ENCODE measurements at regions of chr6 and their contacts with region 1.

Region 1: DNA sequence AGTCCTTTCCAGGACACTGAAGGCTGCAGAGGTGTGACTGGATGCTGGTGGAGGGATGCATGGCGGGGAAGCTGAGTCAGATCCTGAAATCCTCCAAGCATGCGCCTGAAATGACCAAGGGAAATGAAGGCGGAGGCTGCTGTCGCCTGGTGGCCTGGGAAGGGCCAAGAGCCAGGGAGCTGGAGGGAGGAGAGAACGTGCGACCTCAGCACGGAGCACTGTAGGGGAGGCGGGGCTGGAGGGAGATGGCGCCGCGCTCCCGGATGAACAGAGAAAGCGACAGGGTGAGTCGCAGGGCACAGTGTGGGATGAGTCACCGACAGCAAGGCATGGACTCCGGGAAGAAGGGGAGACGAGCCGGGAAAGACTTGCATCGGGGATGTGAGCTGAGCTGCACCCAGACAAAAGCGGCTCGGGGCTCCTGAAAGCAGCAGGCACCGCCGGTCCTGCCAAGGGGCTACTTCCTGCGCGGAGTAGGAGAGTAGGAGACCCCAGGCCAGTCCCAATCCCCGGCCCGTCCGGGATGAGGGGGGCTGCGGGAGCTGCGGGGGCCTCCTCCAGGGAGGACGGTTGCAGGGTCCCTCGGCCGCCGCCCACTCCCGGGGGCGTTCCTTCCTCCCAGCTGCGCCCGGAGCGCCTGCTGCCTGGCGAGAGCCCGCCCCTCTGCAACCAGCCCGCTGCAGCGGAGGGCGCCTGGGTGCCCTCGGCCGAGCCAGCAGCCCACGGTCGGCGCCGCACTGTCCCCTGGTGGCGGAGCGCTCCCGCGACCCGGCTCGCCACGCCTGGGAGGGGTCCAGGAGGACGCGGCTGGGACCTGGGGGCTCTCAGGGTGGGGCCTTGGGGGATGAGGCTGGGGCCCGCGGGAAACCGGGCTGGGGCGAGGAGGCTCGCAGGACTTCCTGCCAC is 11.0 kb upstream of the NQO2 start:
- DNase-seq: peak; percentile 35 to 87 (median 65)
- ATAC-seq: peak; percentile 75 to 79 (median 76)
- H3K4me3 ChIP-seq: peak overlapping the region; percentile 81 to 97
- H3K4me3 Mint-ChIP-seq: peak overlapping the region; percentile 92 to 93 (median 93)
- H3K27ac ChIP-seq: peak overlapping the region; percentile 96
- H3K27ac Mint-ChIP-seq: peak overlapping the region; percentile 100
- H3K4me1 ChIP-seq: peaks cover 14 to 26% of the 10 kb centered on the region in 2 experiments
- H3K4me1 Mint-ChIP-seq: peaks cover 23 to 37% (median 30%) of the 10 kb centered on the region in 3 donors
- H3K27me3 ChIP-seq: no peaks in the 10 kb centered on the region
- H3K27me3 Mint-ChIP-seq: no peaks in the 10 kb centered on the region

Region 2: GRCh38 chr6:2791124-2791974 is 197.3 kb before region 1 on chr6:
- CTCF ChIA-PET with region 1: interaction called, 10 to 19 read pairs
- POLR2A ChIA-PET with region 1: no interaction called
- DNase-seq: peak in 32 of 35 experiments; percentile 17 to 71 (median 40)
- ATAC-seq: peak; percentile 66 to 78 (median 72)
- H3K4me3 ChIP-seq: no peak overlapping the region
- H3K4me3 Mint-ChIP-seq: peak overlapping the region in 1 of 3 donors; percentile 10
- H3K27ac ChIP-seq: no peak overlapping the region
- H3K27ac Mint-ChIP-seq: peak overlapping the region; percentile 77 to 84
- H3K4me1 ChIP-seq: peaks cover 10 to 21% of the 10 kb centered on the region in 2 experiments
- H3K4me1 Mint-ChIP-seq: peaks cover 25 to 40% (median 26%) of the 10 kb centered on the region in 3 donors
- H3K27me3 ChIP-seq: no peaks in the 10 kb centered on the region
- H3K27me3 Mint-ChIP-seq: no peaks in the 10 kb centered on the region

Region 3: GRCh38 chr6:2931970-2932748 is 56.5 kb before region 1 on chr6:
- CTCF ChIA-PET with region 1: interaction called, 5 to 7 read pairs
- POLR2A ChIA-PET with region 1: interaction called, 8 to 32 read pairs
- DNase-seq: peak; percentile 63 to 92 (median 77)
- ATAC-seq: peak; percentile 82 to 99 (median 94)
- H3K4me3 ChIP-seq: no peak overlapping the region
- H3K4me3 Mint-ChIP-seq: peak overlapping the region in 1 of 3 donors; percentile 58
- H3K27ac ChIP-seq: no peak overlapping the region
- H3K27ac Mint-ChIP-seq: peak overlapping the region; percentile 48 to 84
- H3K4me1 ChIP-seq: peaks cover 14 to 18% of the 10 kb centered on the region in 2 experiments
- H3K4me1 Mint-ChIP-seq: peaks cover 18 to 24% (median 23%) of the 10 kb centered on the region in 3 donors
- H3K27me3 ChIP-seq: no peaks in the 10 kb centered on the region
- H3K27me3 Mint-ChIP-seq: no peaks in the 10 kb centered on the region

Region 4: DNA sequence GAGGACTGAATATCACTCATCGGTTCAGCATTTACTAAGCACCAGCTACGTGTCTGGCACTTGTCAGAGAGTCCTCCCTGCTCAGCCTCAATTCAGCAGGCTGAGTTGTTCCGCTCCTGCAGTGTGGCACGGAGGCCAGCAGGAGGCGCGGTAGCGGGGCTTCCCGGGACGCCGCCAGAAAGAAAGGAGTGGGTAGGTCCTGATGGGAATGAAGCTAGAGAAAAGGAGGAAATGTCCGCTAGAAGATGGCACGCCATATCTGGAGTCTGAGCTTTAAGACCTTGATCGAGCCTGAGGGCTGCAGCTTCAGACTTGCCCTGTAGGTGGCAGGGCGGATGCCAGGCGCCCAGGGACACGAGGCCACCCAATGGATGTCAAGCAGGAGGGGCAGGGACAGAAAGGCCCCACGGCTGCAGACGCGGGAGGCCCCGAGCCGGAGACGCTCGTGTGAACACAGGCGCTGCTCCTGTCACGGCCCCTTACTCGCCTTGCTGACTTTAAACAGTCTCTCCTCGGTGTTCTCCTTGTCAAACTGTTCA is 36.1 kb before region 1 on chr6:
- CTCF ChIA-PET with region 1: interaction called, 11 to 16 read pairs
- POLR2A ChIA-PET with region 1: interaction called in 1 of 2 experiments, 3 read pairs
- DNase-seq: peak in 25 of 35 experiments; percentile 21 to 71 (median 49)
- ATAC-seq: peak; percentile 89 to 93 (median 91)
- H3K4me3 ChIP-seq: peak overlapping the region in 1 of 2 donors; percentile 37
- H3K4me3 Mint-ChIP-seq: peak overlapping the region; percentile 25 to 64 (median 53)
- H3K27ac ChIP-seq: peak overlapping the region; percentile 44
- H3K27ac Mint-ChIP-seq: peak overlapping the region; percentile 39
- H3K4me1 ChIP-seq: peaks cover 2 to 13% of the 10 kb centered on the region in 2 experiments
- H3K4me1 Mint-ChIP-seq: peaks cover 4 to 17% (median 13%) of the 10 kb centered on the region in 3 donors
- H3K27me3 ChIP-seq: no peaks in the 10 kb centered on the region
- H3K27me3 Mint-ChIP-seq: no peaks in the 10 kb centered on the region

Region 5: DNA sequence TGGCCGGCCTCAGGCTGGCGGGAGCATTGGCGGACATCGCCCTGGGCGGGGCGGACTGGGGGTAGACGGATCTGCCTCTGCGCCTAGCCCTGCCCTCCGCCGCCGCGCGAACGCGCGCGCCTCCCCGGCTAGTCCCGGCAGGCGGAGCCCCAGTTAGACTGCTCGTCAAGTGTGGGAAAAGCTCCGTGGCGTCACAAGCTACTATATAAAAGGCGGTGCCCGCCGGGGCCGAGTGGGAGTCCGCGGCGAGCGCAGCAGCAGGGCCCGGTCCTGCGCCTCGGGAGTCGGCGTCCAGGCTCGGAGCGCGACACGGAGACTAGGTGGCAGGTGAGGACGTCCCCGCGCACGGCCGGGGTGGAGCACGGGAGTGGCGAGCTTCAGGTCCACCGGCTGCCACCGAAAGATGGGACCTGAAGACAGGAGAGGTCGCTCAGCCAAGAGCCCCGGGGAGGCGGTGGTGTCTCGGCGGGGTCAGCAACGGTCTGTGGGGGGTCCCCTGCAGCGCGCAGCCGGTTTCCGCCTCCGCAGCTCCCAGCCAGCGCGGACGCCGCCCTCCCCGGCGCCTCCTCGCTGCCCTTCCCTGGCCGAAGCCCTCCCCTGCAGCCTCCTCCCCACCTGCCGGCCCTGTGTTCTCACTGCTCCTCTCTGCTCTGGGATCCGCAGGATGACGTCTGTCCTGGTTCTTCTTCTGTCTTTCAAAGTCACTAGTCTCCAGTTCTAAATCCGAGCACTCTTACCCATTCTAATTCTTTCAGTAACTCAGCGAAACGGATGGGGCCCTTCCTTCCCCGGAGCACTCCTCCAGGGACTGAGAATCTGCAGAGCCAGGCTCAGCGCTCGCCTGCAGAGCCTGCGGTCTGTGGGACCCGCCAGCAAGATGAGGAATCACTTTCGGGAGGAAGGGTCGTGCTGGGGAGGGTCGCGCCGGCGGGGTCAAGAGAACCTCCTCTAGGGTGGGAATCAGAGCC is 75.3 kb after region 1 on chr6:
- CTCF ChIA-PET with region 1: interaction called in 1 of 2 experiments, 12 read pairs
- POLR2A ChIA-PET with region 1: interaction called, 5 to 16 read pairs
- DNase-seq: peak; percentile 68 to 92 (median 79)
- ATAC-seq: peak; percentile 77 to 80 (median 79)
- H3K4me3 ChIP-seq: peak overlapping the region; percentile 71 to 83
- H3K4me3 Mint-ChIP-seq: peak overlapping the region; percentile 85 to 96 (median 89)
- H3K27ac ChIP-seq: peak overlapping the region; percentile 67
- H3K27ac Mint-ChIP-seq: peak overlapping the region; percentile 79 to 85
- H3K4me1 ChIP-seq: peaks cover 5 to 24% of the 10 kb centered on the region in 2 experiments
- H3K4me1 Mint-ChIP-seq: peaks cover 31 to 44% (median 38%) of the 10 kb centered on the region in 3 donors
- H3K27me3 ChIP-seq: no peaks in the 10 kb centered on the region
- H3K27me3 Mint-ChIP-seq: no peaks in the 10 kb centered on the region

Region 6: DNA sequence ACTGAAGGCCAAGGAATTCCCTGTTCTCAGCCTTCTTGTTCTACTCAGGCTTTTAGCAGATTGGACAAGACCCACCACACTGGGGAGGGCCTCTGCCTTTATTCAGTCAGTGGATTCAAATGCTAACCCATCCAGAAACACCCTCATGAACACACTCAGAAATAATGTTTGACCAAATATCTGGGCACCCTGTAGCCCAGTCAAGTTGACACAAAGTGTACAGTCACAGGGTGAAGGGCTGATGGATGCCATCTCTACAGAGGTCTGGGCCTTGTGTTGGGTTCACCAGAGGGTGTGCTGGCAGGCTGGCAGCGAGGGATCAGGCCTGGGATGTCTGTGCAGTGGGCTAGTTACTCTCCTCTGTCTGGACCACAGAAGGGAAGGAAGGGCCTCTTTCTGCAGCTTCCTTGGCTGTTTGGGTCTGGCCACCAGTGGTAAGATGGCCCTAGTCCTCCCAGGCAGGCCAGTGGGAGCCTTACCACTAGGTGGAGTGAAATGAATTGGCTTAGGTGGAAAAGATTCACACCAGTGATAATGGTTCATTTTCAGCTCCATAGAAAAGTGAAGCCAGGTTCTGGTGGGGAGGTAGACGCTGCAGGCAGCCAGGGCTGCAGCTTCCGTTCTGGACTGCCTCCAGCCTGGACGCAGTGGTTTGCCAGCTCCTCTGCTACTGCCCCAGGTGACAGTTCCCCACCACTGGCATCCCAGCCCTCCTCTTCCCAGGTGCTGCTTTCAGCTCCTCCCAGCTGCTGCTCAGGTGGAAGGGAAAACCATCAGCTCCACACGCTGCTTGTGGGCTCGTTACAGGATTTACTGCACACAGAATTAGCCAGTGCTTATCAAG is 159.5 kb after region 1 on chr6:
- CTCF ChIA-PET with region 1: no interaction called
- POLR2A ChIA-PET with region 1: no interaction called
- DNase-seq: no peak
- ATAC-seq: no peak
- H3K4me3 ChIP-seq: no peak overlapping the region
- H3K4me3 Mint-ChIP-seq: no peak overlapping the region
- H3K27ac ChIP-seq: no peak overlapping the region
- H3K27ac Mint-ChIP-seq: no peak overlapping the region
- H3K4me1 ChIP-seq: no peaks in the 10 kb centered on the region
- H3K4me1 Mint-ChIP-seq: peaks cover 0 to 5% (median 0%) of the 10 kb centered on the region in 3 donors
- H3K27me3 ChIP-seq: no peaks in the 10 kb centered on the region
- H3K27me3 Mint-ChIP-seq: no peaks in the 10 kb centered on the region

Measured in T-cell (primary cell).